Transverse colon (tissue), 4 donors: ENCODE measurements at regions of chr19 and their contacts with region 1.

Region 1: DNA sequence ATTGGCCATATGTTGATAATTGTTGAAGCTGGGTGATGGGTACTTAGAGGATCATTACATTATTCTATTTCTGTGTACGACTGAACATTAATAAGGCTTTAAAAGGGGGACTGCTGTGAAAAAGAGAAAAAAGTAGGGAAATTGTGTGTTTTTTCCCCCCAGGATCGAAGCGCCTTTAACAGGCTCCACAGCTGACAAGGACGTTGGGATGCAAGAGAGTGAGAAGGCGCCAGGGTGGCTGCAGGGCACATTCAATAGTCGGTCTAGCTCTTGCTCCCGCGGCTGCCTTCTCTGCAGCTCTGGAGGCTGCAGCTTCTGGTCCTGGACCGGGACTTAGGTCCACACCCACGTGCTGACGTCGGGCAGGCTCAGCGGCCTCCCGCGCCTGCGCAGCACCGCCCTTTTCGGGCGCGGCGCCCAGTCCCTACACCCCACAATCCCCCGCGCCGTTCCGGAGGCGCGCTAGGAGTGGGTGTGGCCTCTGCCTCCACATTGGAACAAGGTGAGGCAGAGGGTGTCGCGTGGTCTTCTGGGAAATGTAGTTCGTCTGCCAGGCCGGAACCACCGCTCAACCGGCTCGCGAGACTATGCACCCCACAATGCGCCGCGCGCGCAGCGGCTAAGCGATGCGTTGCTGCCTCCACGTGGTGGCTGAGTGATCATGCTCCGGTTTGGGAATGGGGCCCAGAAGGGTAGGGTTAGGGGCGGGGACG is 4.9 kb upstream of the LRFN3 start:
- DNase-seq: peak; percentile 100
- H3K4me3 ChIP-seq: peak overlapping the region in 2 of 4 donors; percentile 10 to 33
- H3K27ac ChIP-seq: peak overlapping the region; percentile 78 to 84 (median 83)
- H3K4me1 ChIP-seq: peaks cover 6 to 22% (median 13%) of the 10 kb centered on the region in 4 donors
- H3K27me3 ChIP-seq: no peaks in the 10 kb centered on the region
- CTCF ChIP-seq: peak; percentile 65 to 96 (median 80)
- EP300 ChIP-seq: no peak
- POLR2A ChIP-seq: peak; percentile 82

Region 2: DNA sequence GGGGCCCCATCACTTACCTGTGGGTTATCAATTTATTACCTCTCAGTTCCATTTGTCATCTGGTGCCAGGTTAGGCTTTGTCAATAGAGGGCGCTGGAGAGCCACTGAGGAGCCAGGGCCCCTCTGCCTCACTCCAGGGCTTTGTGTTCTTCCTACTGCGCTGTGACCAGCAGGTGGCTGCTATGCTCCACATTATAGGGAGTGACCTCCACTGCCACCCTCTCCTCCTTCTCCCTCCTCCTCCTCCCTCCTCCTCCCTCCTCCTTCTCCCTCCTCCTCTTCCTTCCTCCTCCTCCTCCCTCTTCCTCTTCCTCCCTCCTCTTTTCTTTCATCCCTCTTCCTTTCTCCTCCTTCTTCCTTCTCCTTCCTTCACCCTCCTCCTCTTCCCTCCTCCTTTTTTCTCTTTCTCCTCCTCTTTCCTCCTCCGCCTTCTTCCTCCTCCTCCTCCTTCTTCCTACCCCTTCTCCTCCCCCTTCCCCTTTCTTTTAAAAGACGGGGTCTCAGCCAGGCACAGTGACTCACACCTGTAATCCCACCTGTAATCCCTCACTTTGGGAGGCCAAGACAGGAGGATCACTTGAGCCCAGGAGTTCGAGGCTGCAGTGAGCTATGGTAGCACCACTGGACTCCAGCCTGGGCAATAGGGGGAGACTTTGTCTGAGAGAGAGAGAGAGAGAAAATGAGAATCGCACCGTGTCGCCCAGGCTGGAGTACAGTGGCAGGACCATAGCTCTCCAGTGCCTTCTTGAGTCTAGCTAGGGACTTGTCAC is 237.3 kb before region 1 on chr19:
- in situ Hi-C with region 1: loop called in 1 of 4 experiments (anchors 10 kb)
- intact Hi-C with region 1: no loop called
- DNase-seq: peak; percentile 92
- H3K4me3 ChIP-seq: no peak overlapping the region
- H3K27ac ChIP-seq: no peak overlapping the region
- H3K4me1 ChIP-seq: no peaks in the 10 kb centered on the region
- H3K27me3 ChIP-seq: no peaks in the 10 kb centered on the region
- CTCF ChIP-seq: peak; percentile 93 to 99 (median 97)
- EP300 ChIP-seq: no peak
- POLR2A ChIP-seq: no peak

Region 3: GRCh38 chr19:35740423-35741202 is 190.7 kb before region 1 on chr19:
- in situ Hi-C with region 1: no loop called
- intact Hi-C with region 1: loop called (anchors 10 kb)
- DNase-seq: peak; percentile 98
- H3K4me3 ChIP-seq: peak overlapping the region; percentile 49 to 63 (median 54)
- H3K27ac ChIP-seq: peak overlapping the region; percentile 82 to 97 (median 88)
- H3K4me1 ChIP-seq: peaks cover 8 to 22% (median 16%) of the 10 kb centered on the region in 4 donors
- H3K27me3 ChIP-seq: no peaks in the 10 kb centered on the region
- CTCF ChIP-seq: peak in 2 of 5 experiments; percentile 25 to 33
- EP300 ChIP-seq: peak; percentile 68
- POLR2A ChIP-seq: peak; percentile 52

Region 4: GRCh38 chr19:35783469-35784434 is 147.6 kb before region 1 on chr19:
- in situ Hi-C with region 1: no loop called
- intact Hi-C with region 1: no loop called
- DNase-seq: no peak
- H3K4me3 ChIP-seq: no peak overlapping the region
- H3K27ac ChIP-seq: no peak overlapping the region
- H3K4me1 ChIP-seq: no peaks in the 10 kb centered on the region
- H3K27me3 ChIP-seq: no peaks in the 10 kb centered on the region
- CTCF ChIP-seq: no peak
- EP300 ChIP-seq: no peak
- POLR2A ChIP-seq: no peak

Region 5: DNA sequence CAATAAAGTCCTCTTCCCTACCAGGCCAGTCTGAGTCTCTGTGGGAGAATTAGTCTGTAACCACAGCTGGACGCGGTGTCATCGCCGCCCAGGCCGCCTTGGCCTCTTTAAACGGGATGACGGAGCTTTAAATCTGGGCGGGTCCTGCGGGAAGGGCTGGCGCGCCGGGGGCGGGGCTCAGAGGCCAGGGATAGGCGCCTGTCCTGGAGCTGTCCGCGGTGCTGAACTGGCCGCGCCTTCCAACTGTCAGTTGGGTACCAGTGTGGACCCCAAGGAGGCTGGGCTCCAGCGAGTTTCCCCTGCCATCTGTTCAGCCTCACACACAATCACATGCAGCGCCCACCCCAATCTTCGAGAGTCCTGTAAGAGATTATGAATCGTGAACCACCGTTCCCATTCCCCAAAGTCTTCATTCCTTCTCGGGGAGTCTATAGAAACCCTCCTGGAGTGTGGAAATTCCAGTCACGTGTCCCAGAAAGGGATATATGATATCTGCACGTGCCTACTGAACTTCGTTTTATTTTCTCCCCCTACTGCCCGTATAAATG is 51.5 kb before region 1 on chr19:
- in situ Hi-C with region 1: loop called (anchors 5 to 10 kb)
- intact Hi-C with region 1: loop called (anchors 5 kb)
- DNase-seq: peak; percentile 90
- H3K4me3 ChIP-seq: no peak overlapping the region
- H3K27ac ChIP-seq: no peak overlapping the region
- H3K4me1 ChIP-seq: peaks cover 0 to 4% (median 1%) of the 10 kb centered on the region in 4 donors
- H3K27me3 ChIP-seq: peaks cover 14% of the 10 kb centered on the region
- CTCF ChIP-seq: no peak
- EP300 ChIP-seq: no peak
- POLR2A ChIP-seq: no peak

Region 6: GRCh38 chr19:36054119-36054732 is 122.9 kb after region 1 on chr19 and contains the start of gene THAP8:
- in situ Hi-C with region 1: no loop called
- intact Hi-C with region 1: no loop called
- DNase-seq: peak; percentile 100
- H3K4me3 ChIP-seq: peak within 1 kb of the TSS; percentile 53 to 83 (median 76)
- H3K27ac ChIP-seq: peak within 1 kb of the TSS; percentile 94 to 99 (median 98)
- H3K4me1 ChIP-seq: peaks cover 7 to 18% (median 10%) of the 10 kb centered on the region in 4 donors
- H3K27me3 ChIP-seq: no peaks in the 10 kb centered on the region
- CTCF ChIP-seq: peak; percentile 45 to 85 (median 62)
- EP300 ChIP-seq: no peak
- POLR2A ChIP-seq: peak; percentile 80
- total RNA-seq, gene THAP8: 9.5 to 64.1 (median 11.2) TPM in 3 of 4 donors, not detected in the other

Region 7: DNA sequence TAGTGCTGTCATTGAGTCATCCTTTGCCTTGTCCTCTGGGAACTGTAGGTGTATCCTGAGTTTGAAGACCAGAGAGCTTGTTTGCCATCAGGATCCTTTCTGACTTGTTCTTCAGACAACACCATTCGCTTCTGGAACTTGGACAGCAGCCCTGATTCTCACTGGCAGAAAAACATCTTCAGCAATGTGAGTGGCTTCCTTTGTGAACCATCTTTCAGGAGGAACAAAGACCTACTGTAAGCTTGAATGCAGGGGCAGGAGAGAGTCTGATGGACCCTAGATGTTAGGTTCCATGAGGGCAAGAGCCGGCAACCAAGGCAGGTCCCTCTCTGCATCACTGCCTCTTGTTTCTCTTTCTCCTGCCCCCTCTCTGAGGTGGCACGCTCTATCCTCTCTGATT is 150.1 kb after region 1 on chr19:
- in situ Hi-C with region 1: no loop called
- intact Hi-C with region 1: no loop called
- DNase-seq: no peak
- H3K4me3 ChIP-seq: no peak overlapping the region
- H3K27ac ChIP-seq: no peak overlapping the region
- H3K4me1 ChIP-seq: no peaks in the 10 kb centered on the region
- H3K27me3 ChIP-seq: no peaks in the 10 kb centered on the region
- CTCF ChIP-seq: no peak
- EP300 ChIP-seq: no peak
- POLR2A ChIP-seq: no peak